OCI-LY7 (cell line): ENCODE measurements at regions of chr11 and their contacts with region 1.

Region 1: GRCh38 chr11:130181295-130182272 is 22.0 kb downstream of the ST14 start:
- DNase-seq: peak; percentile 98
- H3K4me3 ChIP-seq: peak overlapping the region; percentile 64
- H3K27ac ChIP-seq: peak overlapping the region; percentile 99
- H3K4me1 ChIP-seq: peaks cover 96% of the 10 kb centered on the region
- CTCF ChIP-seq: peak; percentile 35; the same call in 1 of the 2 replicates

Region 2: DNA sequence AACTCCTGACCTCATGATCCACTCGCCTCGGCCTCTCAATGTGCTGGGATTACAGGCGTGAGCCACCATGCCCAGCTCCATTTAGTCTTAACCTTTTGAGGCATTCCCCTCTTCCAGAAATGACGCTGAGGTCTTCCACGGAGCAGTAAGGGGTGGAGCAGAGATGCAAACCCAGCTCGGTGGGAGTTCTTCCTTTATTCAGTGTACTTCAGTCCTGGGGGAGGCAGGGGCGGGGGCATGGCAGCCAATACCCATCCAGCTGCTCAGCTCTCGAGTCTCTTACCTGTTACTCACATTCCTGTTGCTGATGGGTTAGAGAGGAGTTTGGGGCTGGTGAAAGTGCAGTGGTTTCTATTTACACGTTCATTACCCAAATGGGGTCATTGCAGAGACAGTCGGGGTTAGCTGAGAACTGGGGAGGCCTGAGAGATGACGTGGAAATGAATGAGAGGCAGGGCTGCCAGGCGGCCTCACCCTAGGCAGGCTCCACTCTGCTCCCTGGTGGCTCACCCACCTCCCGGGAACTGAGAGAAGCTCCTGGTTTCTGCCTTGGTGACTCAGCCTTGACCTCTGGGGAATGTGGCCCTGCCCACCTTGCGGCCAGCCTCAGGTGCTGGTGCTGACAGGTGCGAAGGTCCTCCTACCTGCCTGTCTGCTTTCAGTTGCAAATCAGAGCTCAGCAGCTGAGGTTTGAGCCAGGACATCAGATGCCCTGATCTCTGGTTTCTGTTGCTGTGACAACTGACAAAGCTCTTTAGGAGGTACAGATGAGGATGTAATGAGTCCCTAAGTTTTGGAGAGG is 35.4 kb before region 1 on chr11:
- CTCF ChIA-PET with region 1: no interaction called
- POLR2A ChIA-PET with region 1: interaction called, 74 read pairs
- intact Hi-C with region 1: loop called (anchors 5 kb)
- DNase-seq: no peak
- H3K4me3 ChIP-seq: no peak overlapping the region
- H3K27ac ChIP-seq: peak overlapping the region; percentile 67
- H3K4me1 ChIP-seq: peaks cover 42% of the 10 kb centered on the region
- CTCF ChIP-seq: peak; percentile 64

Region 3: GRCh38 chr11:130159657-130160497 is 21.7 kb before region 1 on chr11 and contains the start of gene ST14:
- CTCF ChIA-PET with region 1: interaction called, 3 read pairs
- POLR2A ChIA-PET with region 1: interaction called, 74 read pairs
- intact Hi-C with region 1: loop called (anchors 1 kb)
- DNase-seq: peak; percentile 70
- H3K4me3 ChIP-seq: peak within 1 kb of the TSS; percentile 74
- H3K27ac ChIP-seq: peak within 1 kb of the TSS; percentile 93
- H3K4me1 ChIP-seq: peaks cover 76% of the 10 kb centered on the region
- CTCF ChIP-seq: no peak; the same call in 1 of the 2 replicates
- total RNA-seq, gene ST14: 110 and 135 TPM in 2 replicates

Region 4: DNA sequence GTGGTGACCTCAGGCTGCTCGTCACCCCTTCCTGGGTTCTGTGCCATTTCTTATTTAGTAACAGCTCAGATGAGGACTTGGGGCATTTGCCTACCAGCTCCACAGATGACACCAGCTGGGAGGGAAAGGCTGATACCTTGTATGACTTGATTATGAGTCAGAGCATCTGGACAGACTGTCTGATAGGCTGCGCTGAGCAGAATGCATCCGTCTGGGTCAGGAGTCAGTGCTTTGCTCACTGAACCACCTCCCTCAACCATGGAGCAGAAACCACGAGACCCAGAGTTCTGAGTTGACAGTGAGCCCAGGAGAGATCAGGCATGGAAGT is 15.2 kb before region 1 on chr11:
- CTCF ChIA-PET with region 1: interaction called, 3 read pairs
- POLR2A ChIA-PET with region 1: interaction called, 67 read pairs
- intact Hi-C with region 1: loop called (anchors 1 kb)
- DNase-seq: peak; percentile 92
- H3K4me3 ChIP-seq: peak overlapping the region; percentile 57
- H3K27ac ChIP-seq: peak overlapping the region; percentile 93
- H3K4me1 ChIP-seq: peaks cover 99% of the 10 kb centered on the region
- CTCF ChIP-seq: no peak